ENCODE measurements at regions of chr4 and their contacts with region 1.

Region 1: DNA sequence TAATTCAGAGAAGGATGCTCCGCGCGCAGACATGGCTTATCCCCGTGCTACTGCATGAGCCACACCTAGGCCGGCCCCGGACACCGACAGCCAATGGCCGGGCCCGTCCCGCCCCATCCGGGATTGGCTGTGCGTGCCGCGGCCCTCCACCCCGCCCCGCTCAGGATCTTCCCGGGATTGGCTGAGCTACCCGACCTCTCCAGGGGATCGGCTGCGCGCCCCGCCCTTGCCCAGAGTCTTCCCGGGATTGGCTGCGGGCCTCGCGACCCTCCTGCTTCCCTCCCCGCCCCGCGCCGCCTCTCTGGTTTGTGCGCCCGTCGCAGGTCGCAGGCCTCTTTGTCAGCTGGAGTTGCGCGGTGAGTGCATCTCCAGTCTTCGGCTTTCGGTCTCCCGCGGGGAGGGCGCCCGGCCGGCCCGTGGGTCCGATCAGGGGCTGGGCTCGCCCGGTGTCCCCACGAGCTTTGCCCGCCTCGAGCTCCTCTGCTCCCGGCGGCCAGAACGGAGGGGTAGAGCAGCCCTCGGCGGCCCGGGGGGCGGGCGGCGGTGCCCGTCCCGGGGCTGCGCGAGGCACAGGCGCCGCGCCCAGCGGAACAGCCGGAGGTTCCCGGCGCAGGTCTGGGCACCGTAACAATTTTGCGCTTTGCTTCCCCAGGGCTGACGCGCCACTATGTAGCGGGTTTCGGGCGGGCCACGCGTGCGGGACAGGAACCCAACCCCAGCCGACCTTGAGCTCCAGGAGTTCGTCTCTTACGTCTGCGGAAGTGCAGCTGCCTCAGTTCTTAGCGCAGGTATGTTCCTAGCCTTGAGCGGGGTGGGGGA is 38.8 kb downstream of the ERVMER34-1 start:
- DNase-seq: peak; percentile 98
- H3K4me3 ChIP-seq: peak overlapping the region; percentile 93 to 95
- H3K27ac ChIP-seq: peak overlapping the region; percentile 69 to 91
- H3K4me1 ChIP-seq: peaks cover 15% of the 10 kb centered on the region
- H3K27me3 ChIP-seq: no peaks in the 10 kb centered on the region
- CTCF ChIP-seq: no peak
- POLR2A ChIP-seq: peak; percentile 50

Region 2: GRCh38 chr4:52861879-52862616 is 149.7 kb after region 1 on chr4 and contains the start of gene RASL11B:
- intact Hi-C with region 1: loop called (anchors 10 kb)
- DNase-seq: peak; percentile 91
- H3K4me3 ChIP-seq: peak within 1 kb of the TSS; percentile 79 to 90
- H3K27ac ChIP-seq: peak within 1 kb of the TSS; percentile 81 to 86
- H3K4me1 ChIP-seq: peaks cover 25% of the 10 kb centered on the region
- H3K27me3 ChIP-seq: no peaks in the 10 kb centered on the region
- CTCF ChIP-seq: peak; percentile 26 to 54 (median 30)
- POLR2A ChIP-seq: peak; percentile 75
- total RNA-seq, gene RASL11B: 16.7 to 25.5 TPM

Region 3: GRCh38 chr4:53132132-53132896 is 419.9 kb after region 1 on chr4:
- intact Hi-C with region 1: no loop called
- DNase-seq: no peak
- H3K4me3 ChIP-seq: no peak overlapping the region
- H3K27ac ChIP-seq: no peak overlapping the region
- H3K4me1 ChIP-seq: peaks cover 3% of the 10 kb centered on the region
- H3K27me3 ChIP-seq: no peaks in the 10 kb centered on the region
- CTCF ChIP-seq: no peak
- POLR2A ChIP-seq: no peak

Measured in testis (tissue), 5 donors.